WTC11 (cell line): ENCODE measurements at regions of chr10 and their contacts with region 1.

Region 1: GRCh38 chr10:69957886-69958555 is 94.6 kb upstream of the MACROH2A2 start:
- DNase-seq: peak; percentile 34
- ATAC-seq: peak; percentile 82
- H3K4me3 Mint-ChIP-seq: no peak overlapping the region
- H3K27ac Mint-ChIP-seq: no peak overlapping the region
- H3K4me1 Mint-ChIP-seq: peaks cover 2% of the 10 kb centered on the region
- H3K27me3 Mint-ChIP-seq: peaks cover 10% of the 10 kb centered on the region
- CTCF ChIP-seq: peak; percentile 60

Region 2: GRCh38 chr10:69786791-69787190 is 171.2 kb before region 1 on chr10:
- CTCF ChIA-PET with region 1: interaction called, 104 read pairs
- POLR2A ChIA-PET with region 1: no interaction called
- DNase-seq: no peak
- ATAC-seq: peak; percentile 85
- H3K4me3 Mint-ChIP-seq: no peak overlapping the region
- H3K27ac Mint-ChIP-seq: no peak overlapping the region
- H3K4me1 Mint-ChIP-seq: no peaks in the 10 kb centered on the region
- H3K27me3 Mint-ChIP-seq: peaks cover 17% of the 10 kb centered on the region
- CTCF ChIP-seq: no peak

Region 3: GRCh38 chr10:69869291-69869961 is 88.6 kb before region 1 on chr10:
- CTCF ChIA-PET with region 1: interaction called, 13 read pairs
- POLR2A ChIA-PET with region 1: no interaction called
- DNase-seq: no peak
- ATAC-seq: no peak
- H3K4me3 Mint-ChIP-seq: no peak overlapping the region
- H3K27ac Mint-ChIP-seq: no peak overlapping the region
- H3K4me1 Mint-ChIP-seq: peaks cover 93% of the 10 kb centered on the region
- H3K27me3 Mint-ChIP-seq: peaks cover 18% of the 10 kb centered on the region
- CTCF ChIP-seq: no peak

Region 4: GRCh38 chr10:69936091-69936490 is 21.9 kb before region 1 on chr10:
- CTCF ChIA-PET with region 1: interaction called, 20 read pairs
- POLR2A ChIA-PET with region 1: no interaction called
- DNase-seq: peak; percentile 41
- ATAC-seq: peak; percentile 81
- H3K4me3 Mint-ChIP-seq: no peak overlapping the region
- H3K27ac Mint-ChIP-seq: no peak overlapping the region
- H3K4me1 Mint-ChIP-seq: no peaks in the 10 kb centered on the region
- H3K27me3 Mint-ChIP-seq: no peaks in the 10 kb centered on the region; the same call in 1 of the 2 replicates
- CTCF ChIP-seq: no peak

Region 5: DNA sequence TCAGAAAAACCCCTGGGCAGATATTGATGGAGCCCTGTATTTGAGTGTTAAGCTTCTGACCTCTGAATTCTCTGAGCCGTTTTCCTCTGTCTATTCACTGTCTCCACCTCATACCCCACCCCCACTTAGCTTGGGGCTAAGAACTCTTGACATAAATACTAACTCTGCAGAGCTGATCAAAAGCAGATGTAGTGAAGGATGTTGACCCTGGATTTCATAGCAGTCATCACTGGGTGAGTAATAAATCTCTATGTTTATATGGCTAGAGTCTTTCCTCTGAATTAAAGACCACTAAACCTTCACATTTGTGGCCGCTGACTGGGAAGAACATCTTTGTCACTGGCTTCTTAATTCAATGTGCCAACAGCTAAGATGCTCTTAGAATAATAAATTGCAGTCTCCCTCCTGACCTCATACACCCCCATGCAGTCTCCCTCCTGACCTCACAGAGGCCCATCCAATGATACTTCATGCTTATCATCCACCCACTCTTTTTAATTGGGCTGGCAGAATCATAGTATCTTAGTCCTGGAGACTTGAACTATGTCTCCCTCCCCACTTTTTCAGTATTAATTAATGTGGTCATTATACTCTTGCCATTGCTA is 16.6 kb after region 1 on chr10:
- CTCF ChIA-PET with region 1: interaction called, 18 read pairs
- POLR2A ChIA-PET with region 1: no interaction called
- DNase-seq: no peak
- ATAC-seq: no peak
- H3K4me3 Mint-ChIP-seq: no peak overlapping the region
- H3K27ac Mint-ChIP-seq: no peak overlapping the region
- H3K4me1 Mint-ChIP-seq: peaks cover 10% of the 10 kb centered on the region
- H3K27me3 Mint-ChIP-seq: peaks cover 41% of the 10 kb centered on the region
- CTCF ChIP-seq: no peak

Region 6: DNA sequence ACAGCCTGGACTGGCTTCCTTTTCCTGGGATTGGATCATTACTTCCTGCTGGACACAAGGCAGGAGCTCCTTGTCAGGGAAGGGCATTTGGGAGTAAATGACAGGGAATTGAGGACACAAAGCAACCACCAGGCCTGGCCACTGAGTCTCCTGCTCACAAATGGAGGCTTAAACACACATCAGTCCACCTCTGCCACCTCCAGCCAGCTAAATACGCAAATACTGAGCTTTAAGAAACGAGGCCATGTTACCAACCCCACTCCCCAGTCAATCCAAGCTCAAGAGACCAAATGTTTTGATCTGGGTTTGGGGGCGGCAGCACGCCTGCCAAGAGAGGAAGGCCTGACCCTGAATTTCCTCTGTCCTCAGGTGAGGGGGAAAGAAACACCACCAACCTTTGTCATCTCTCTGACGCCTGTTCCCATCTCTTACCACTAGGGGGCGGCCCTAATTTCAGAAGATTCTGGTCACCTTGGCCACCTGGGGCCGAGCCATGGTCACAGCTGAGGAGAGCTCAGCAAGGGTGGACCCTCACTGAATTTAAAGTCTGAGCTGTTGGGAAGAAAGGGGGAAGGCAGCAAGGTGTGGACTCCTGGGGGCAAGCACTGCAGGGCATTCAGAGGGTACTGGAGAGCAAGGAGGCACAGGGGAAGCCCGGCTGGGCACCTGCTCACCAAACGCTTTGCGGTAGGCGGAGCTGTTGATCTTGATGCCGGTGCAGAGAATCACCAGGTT is 158.1 kb after region 1 on chr10:
- CTCF ChIA-PET with region 1: interaction called, 15 read pairs
- POLR2A ChIA-PET with region 1: no interaction called
- DNase-seq: peak; percentile 77
- ATAC-seq: peak; percentile 85
- H3K4me3 Mint-ChIP-seq: no peak overlapping the region
- H3K27ac Mint-ChIP-seq: 0 out of 2 replicates have a peak overlapping the region, but pooled peaks have one; percentile 30
- H3K4me1 Mint-ChIP-seq: peaks cover 10% of the 10 kb centered on the region; the same call in 1 of the 2 replicates
- H3K27me3 Mint-ChIP-seq: no peaks in the 10 kb centered on the region
- CTCF ChIP-seq: peak; percentile 92

Region 7: GRCh38 chr10:70925377-70926225 is 967.6 kb after region 1 on chr10:
- CTCF ChIA-PET with region 1: no interaction called
- POLR2A ChIA-PET with region 1: no interaction called
- DNase-seq: peak; percentile 77
- ATAC-seq: peak; percentile 89
- H3K4me3 Mint-ChIP-seq: no peak overlapping the region
- H3K27ac Mint-ChIP-seq: no peak overlapping the region
- H3K4me1 Mint-ChIP-seq: no peaks in the 10 kb centered on the region
- H3K27me3 Mint-ChIP-seq: no peaks in the 10 kb centered on the region; the same call in 1 of the 2 replicates
- CTCF ChIP-seq: peak; percentile 95